ENCODE measurements at regions of chr13 and their contacts with region 1.

Region 1: GRCh38 chr13:22278336-22278929 is 607.6 kb downstream of the FGF9 start:
- H3K4me3 Mint-ChIP-seq: no peak overlapping the region
- H3K27ac Mint-ChIP-seq: no peak overlapping the region
- H3K4me1 Mint-ChIP-seq: no peaks in the 10 kb centered on the region
- H3K27me3 Mint-ChIP-seq: no peaks in the 10 kb centered on the region

Region 2: DNA sequence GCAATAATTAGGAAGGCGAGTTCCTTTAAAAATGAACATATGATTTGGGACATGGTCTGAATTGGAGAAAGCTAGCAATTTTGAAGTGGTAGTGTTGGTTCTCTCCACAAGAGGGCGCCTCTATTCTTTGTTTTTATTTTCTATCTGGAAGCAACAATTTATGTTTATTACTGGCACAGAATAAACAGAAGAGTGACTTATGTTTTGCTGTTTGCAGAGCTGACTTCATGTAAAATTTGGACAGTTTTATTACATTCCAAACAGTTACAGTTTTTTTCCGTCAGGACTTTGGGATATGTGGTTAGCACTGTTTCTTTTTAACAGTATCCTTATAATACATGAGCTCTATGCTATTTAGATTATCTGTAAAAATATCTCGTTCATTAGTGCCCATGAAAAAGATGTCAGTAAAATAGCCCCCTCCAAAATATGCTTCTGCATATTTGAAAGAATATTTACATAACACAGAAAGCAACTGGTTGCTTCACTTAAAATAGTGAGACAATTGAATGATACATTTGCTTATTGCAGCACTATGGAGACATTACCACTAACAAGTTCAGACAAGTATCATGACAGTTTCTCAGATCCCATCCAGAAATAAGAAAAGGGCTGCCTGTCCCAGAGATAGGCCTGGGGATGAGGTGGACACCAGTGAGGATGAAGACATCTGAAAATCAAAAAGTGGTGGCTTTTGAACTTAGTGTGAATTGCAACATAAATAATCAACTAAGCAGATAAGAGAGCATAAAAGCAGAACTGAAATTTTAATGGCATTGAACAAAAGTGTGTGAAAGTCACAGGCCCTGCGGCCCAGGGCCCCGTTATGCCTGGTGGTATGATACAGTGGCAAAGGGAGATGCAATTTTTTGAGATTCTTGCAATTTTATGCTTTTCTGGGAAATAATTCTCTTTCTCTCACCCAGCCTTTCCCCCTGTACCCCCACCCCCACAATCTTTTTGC is 639.8 kb before region 1 on chr13:
- intact Hi-C with region 1: loop called (anchors 1 kb)
- H3K4me3 Mint-ChIP-seq: no peak overlapping the region
- H3K27ac Mint-ChIP-seq: no peak overlapping the region
- H3K4me1 Mint-ChIP-seq: peaks cover 4% of the 10 kb centered on the region
- H3K27me3 Mint-ChIP-seq: peaks cover 4% of the 10 kb centered on the region

Region 3: GRCh38 chr13:21849323-21849722 is 429.1 kb before region 1 on chr13:
- intact Hi-C with region 1: loop called (anchors 5 kb)
- H3K4me3 Mint-ChIP-seq: no peak overlapping the region
- H3K27ac Mint-ChIP-seq: no peak overlapping the region
- H3K4me1 Mint-ChIP-seq: no peaks in the 10 kb centered on the region
- H3K27me3 Mint-ChIP-seq: no peaks in the 10 kb centered on the region

Region 4: DNA sequence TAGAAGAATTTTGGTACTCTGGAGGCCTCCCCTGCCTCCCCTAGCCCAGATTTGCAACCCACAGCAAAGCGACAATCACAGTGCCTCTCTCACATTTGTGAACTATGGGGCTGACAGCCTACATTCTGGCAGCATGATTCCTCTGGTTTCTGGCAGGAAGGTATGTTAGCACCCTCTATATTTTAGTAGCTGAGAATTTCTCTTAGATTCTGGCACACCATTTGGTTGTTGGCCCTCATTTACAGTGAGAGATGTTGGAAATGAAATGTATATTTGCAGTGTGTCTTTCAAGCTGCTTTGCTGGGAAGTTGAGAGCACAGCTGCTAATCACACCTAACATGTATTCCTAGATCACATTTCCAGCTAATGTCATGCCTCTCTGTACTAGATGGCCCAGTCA is 127.5 kb after region 1 on chr13:
- intact Hi-C with region 1: no loop called
- H3K4me3 Mint-ChIP-seq: no peak overlapping the region
- H3K27ac Mint-ChIP-seq: no peak overlapping the region
- H3K4me1 Mint-ChIP-seq: no peaks in the 10 kb centered on the region
- H3K27me3 Mint-ChIP-seq: no peaks in the 10 kb centered on the region

Region 5: DNA sequence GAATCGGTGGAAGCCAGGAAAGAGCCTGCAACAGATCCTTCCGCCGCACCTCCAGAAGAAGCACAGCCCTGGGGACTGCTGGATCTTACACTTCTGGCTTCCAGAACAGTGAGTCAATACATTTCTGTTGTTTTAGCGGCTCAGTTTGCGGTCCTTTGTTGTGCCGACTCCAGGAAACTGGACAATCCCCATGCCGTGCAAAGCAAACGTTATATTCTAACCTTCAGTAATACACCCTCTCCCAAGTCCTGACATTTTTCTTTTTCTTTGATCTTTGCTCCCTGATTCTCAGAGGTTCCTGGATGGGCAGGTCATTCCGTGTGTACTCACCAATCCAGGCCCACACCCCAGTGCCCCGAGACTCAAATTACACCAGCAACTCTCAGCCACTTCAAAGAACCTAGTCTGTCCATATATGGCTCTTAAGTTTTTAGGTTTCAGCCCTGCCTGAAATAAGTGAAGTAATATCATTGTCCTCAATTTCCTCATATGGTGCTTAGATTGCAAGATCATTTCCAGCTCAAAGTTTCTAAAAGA is 515.2 kb after region 1 on chr13:
- intact Hi-C with region 1: loop called (anchors 10 kb)
- H3K4me3 Mint-ChIP-seq: no peak overlapping the region
- H3K27ac Mint-ChIP-seq: no peak overlapping the region
- H3K4me1 Mint-ChIP-seq: peaks cover 5% of the 10 kb centered on the region
- H3K27me3 Mint-ChIP-seq: peaks cover 5% of the 10 kb centered on the region